Activated CD4-positive, alpha-beta memory T cell treated with anti-CD3 and anti-CD28 coated beads for 36 hours (primary cell): ENCODE measurements at regions of chr9 and their contacts with region 1.

Region 1: GRCh38 chr9:21031091-21031807 is at the start of gene HACD4:
- DNase-seq: peak; percentile 77
- H3K4me3 Mint-ChIP-seq: peak within 1 kb of the TSS; percentile 60
- H3K27ac Mint-ChIP-seq: peak within 1 kb of the TSS; percentile 66
- H3K4me1 Mint-ChIP-seq: peaks cover 21% of the 10 kb centered on the region
- H3K27me3 Mint-ChIP-seq: no peaks in the 10 kb centered on the region
- total RNA-seq, gene HACD4: 1.9 to 2.4 TPM

Region 2: GRCh38 chr9:19629488-19629887 is 1401.8 kb before region 1 on chr9:
- CTCF ChIA-PET with region 1: no interaction called
- POLR2A ChIA-PET with region 1: no interaction called
- intact Hi-C with region 1: no loop called
- DNase-seq: no peak
- H3K4me3 Mint-ChIP-seq: no peak overlapping the region
- H3K27ac Mint-ChIP-seq: no peak overlapping the region
- H3K4me1 Mint-ChIP-seq: no peaks in the 10 kb centered on the region
- H3K27me3 Mint-ChIP-seq: no peaks in the 10 kb centered on the region

Region 3: DNA sequence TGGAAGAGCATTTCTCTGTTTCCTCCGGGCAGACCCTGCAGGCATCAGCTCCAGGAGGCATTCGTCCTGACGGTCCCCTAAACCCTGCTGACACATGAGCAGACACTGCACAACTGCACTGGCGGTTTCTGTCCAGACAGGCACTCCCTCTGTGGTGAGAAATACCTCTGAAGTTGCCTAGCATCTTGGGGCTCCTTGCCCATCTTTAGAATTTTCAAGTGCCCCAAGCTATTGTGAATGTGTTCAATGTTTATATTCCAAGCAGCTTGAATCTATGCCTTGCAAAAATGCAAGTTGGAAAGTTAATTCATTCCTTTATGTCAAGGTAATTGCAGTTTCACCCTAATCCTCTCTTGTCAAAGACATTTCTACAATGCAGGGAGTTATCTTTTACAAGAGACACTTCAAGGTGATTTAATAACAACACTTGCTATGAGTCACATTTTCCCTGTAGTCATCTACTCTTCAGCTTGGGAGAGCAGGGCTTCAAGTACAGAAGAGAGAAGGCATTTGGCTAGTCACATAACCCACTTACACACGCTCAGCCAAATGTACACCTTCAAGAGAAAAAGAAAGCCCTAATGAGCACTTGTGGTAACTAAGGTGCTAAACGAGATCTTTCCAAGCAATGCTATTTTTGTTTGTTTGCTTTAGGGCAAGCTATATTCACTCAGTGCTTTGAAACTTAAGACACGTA is 711.5 kb before region 1 on chr9:
- CTCF ChIA-PET with region 1: no interaction called
- POLR2A ChIA-PET with region 1: no interaction called
- intact Hi-C with region 1: loop called (anchors 2 kb)
- DNase-seq: peak; percentile 48
- H3K4me3 Mint-ChIP-seq: no peak overlapping the region
- H3K27ac Mint-ChIP-seq: peak overlapping the region; percentile 63
- H3K4me1 Mint-ChIP-seq: peaks cover 80% of the 10 kb centered on the region
- H3K27me3 Mint-ChIP-seq: no peaks in the 10 kb centered on the region

Region 4: GRCh38 chr9:20640331-20641187 is 390.7 kb before region 1 on chr9:
- CTCF ChIA-PET with region 1: no interaction called
- POLR2A ChIA-PET with region 1: no interaction called
- intact Hi-C with region 1: loop called (anchors 2 kb)
- DNase-seq: peak; percentile 81
- H3K4me3 Mint-ChIP-seq: peak overlapping the region; percentile 18
- H3K27ac Mint-ChIP-seq: peak overlapping the region; percentile 49
- H3K4me1 Mint-ChIP-seq: peaks cover 10% of the 10 kb centered on the region
- H3K27me3 Mint-ChIP-seq: peaks cover 3% of the 10 kb centered on the region

Region 5: GRCh38 chr9:20929276-20929675 is 102.0 kb before region 1 on chr9:
- CTCF ChIA-PET with region 1: no interaction called
- POLR2A ChIA-PET with region 1: no interaction called
- intact Hi-C with region 1: no loop called
- DNase-seq: no peak
- H3K4me3 Mint-ChIP-seq: no peak overlapping the region
- H3K27ac Mint-ChIP-seq: no peak overlapping the region
- H3K4me1 Mint-ChIP-seq: peaks cover 24% of the 10 kb centered on the region
- H3K27me3 Mint-ChIP-seq: no peaks in the 10 kb centered on the region

Region 6: GRCh38 chr9:21078717-21079116 is 47.5 kb after region 1 on chr9:
- CTCF ChIA-PET with region 1: interaction called, 3 read pairs
- POLR2A ChIA-PET with region 1: no interaction called
- intact Hi-C with region 1: loop called (anchors 5 kb)
- DNase-seq: no peak
- H3K4me3 Mint-ChIP-seq: no peak overlapping the region
- H3K27ac Mint-ChIP-seq: no peak overlapping the region
- H3K4me1 Mint-ChIP-seq: peaks cover 21% of the 10 kb centered on the region
- H3K27me3 Mint-ChIP-seq: peaks cover 2% of the 10 kb centered on the region

Region 7: GRCh38 chr9:21334701-21335632 is 303.7 kb after region 1 on chr9 and contains the start of gene KLHL9:
- CTCF ChIA-PET with region 1: no interaction called
- POLR2A ChIA-PET with region 1: no interaction called
- intact Hi-C with region 1: loop called (anchors 10 kb)
- DNase-seq: peak; percentile 92
- H3K4me3 Mint-ChIP-seq: peak within 1 kb of the TSS; percentile 86
- H3K27ac Mint-ChIP-seq: peak within 1 kb of the TSS; percentile 87
- H3K4me1 Mint-ChIP-seq: peaks cover 50% of the 10 kb centered on the region
- H3K27me3 Mint-ChIP-seq: no peaks in the 10 kb centered on the region
- total RNA-seq, gene KLHL9: 15.9 to 16.0 TPM

Region 8: GRCh38 chr9:21528123-21528808 is 497.0 kb after region 1 on chr9:
- CTCF ChIA-PET with region 1: no interaction called
- POLR2A ChIA-PET with region 1: no interaction called
- intact Hi-C with region 1: no loop called
- DNase-seq: no peak
- H3K4me3 Mint-ChIP-seq: no peak overlapping the region
- H3K27ac Mint-ChIP-seq: no peak overlapping the region
- H3K4me1 Mint-ChIP-seq: no peaks in the 10 kb centered on the region
- H3K27me3 Mint-ChIP-seq: peaks cover 3% of the 10 kb centered on the region